Heart left ventricle (tissue), 16 donors: ENCODE measurements at regions of chr10 and their contacts with region 1.

Region 1: DNA sequence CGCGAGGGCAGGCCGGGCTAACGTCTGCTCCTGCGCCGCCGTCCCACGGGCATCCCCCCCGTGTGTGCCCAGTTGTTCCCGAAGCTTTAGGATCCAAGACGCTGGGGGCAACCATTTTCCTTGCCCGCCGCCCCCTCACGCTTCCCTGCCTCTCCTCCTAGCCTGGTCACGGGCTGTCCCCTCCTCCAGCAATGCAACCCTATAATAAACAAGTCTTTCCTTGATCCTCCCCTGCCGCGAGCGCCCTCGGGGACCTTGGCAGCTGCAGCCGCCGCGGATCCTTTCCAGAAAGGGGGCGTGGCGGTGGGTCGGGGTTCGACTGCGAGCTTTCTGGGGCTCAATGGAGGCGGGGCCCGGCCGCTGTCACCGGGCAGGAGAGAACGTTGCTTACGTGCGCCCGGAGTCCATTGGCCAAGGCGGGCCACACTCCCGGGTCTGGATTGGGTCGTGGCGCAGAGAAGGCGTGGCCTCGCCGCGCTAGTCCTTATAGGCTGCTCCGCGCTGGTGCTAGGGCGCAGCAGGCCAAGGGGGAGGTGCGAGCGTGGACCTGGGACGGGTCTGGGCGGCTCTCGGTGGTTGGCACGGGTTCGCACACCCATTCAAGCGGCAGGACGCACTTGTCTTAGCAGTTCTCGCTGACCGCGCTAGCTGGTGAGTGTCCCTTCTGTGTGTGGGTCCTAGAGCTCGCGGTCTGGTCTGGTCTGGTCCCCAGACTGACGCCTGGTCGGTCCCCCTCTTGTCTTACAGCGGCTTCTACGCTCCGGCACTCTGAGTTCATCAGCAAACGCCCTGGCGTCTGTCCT is at the start of gene DDIT4:
- DNase-seq: peak; percentile 99 to 100 (median 100)
- ATAC-seq: peak; percentile 91 to 94 (median 92)
- H3K4me3 ChIP-seq: peak within 1 kb of the TSS; percentile 66 to 98 (median 76)
- H3K27ac ChIP-seq: peak within 1 kb of the TSS; percentile 95 to 100 (median 99)
- H3K4me1 ChIP-seq: peaks cover 6 to 54% (median 34%) of the 10 kb centered on the region in 12 donors
- H3K27me3 ChIP-seq: no peaks in the 10 kb centered on the region
- CTCF ChIP-seq: no peak
- POLR2A ChIP-seq: peak; percentile 99 to 100
- total RNA-seq, gene DDIT4: 14.6 to 68.2 (median 40.4) TPM

Region 2: DNA sequence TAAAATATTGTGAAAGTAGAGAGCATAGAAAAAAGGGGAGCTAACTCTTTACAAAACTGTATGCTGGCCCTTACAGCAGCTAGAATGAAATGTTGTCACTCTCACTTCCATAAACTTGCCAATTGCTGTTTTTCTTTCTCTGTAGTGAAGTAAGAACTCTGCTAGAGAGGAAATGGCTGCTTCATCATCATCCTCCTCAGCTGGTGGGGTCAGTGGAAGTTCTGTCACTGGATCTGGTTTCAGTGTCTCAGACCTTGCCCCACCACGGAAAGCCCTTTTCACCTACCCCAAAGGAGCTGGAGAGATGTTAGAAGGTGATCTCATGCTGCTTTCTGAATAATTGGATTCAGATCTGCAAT is 49.9 kb before region 1 on chr10:
- intact Hi-C with region 1: loop called in 1 of 10 experiments (anchors 2 kb)
- DNase-seq: no peak
- ATAC-seq: peak; percentile 13 to 61 (median 32)
- H3K4me3 ChIP-seq: no peak overlapping the region
- H3K27ac ChIP-seq: peak overlapping the region in 11 of 12 donors; percentile 14 to 78 (median 58)
- H3K4me1 ChIP-seq: peaks cover 0 to 57% (median 21%) of the 10 kb centered on the region in 12 donors
- H3K27me3 ChIP-seq: no peaks in the 10 kb centered on the region
- CTCF ChIP-seq: no peak
- POLR2A ChIP-seq: no peak

Region 3: DNA sequence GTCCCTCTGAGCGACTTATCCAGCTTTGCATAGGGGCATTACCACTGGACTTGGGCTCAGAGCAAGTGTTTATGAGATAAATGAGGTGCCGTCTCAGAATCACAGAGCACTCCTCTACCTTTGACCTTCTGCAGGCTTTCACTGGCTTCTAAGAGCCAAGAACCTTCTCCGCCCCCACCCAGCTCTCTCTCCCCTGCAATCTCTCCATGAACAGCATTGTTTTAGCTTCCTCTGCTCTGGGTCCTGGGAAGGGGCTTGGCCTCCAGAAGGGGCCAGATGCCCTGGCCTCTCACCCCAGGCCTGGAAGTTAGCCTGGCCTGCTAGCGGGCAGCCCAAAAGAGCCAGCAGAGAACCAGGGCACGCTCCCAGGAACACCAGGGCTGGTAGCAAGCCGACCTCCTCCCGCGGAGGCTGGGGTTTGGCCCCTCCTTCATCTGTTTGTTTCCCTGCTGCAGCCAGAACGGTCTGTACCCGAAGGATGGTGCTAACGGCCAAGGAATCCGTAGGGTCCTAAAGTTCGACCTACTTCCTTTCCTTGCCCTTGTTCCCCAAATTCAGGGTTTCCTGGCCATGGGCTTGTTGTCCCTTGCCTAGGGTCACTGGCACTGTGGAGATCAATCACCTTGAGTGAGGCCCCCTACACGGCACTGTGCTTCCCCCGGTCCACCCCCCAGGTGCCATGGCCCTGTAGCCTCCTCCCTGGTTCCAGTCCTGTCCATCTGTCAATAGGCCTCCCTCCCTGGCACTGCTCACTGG is 18.6 kb before region 1 on chr10:
- intact Hi-C with region 1: loop called in 4 of 10 experiments (anchors 1 to 2 kb)
- DNase-seq: peak; percentile 87 to 96 (median 93)
- ATAC-seq: peak; percentile 92 to 95 (median 92)
- H3K4me3 ChIP-seq: peak overlapping the region in 7 of 12 donors; percentile 4 to 31 (median 23)
- H3K27ac ChIP-seq: peak overlapping the region; percentile 74 to 97 (median 94)
- H3K4me1 ChIP-seq: peaks cover 34 to 96% (median 78%) of the 10 kb centered on the region in 12 donors
- H3K27me3 ChIP-seq: no peaks in the 10 kb centered on the region
- CTCF ChIP-seq: peak in 3 of 12 donors; percentile 8 to 23 (median 13)
- POLR2A ChIP-seq: peak in 1 of 2 donors; percentile 67

Region 4: GRCh38 chr10:72297968-72298773 is 24.6 kb after region 1 on chr10:
- intact Hi-C with region 1: loop called in 1 of 10 experiments (anchors 2 kb)
- DNase-seq: peak; percentile 98 to 100 (median 99)
- ATAC-seq: peak; percentile 94 to 98 (median 96)
- H3K4me3 ChIP-seq: peak overlapping the region; percentile 42 to 92 (median 70)
- H3K27ac ChIP-seq: peak overlapping the region; percentile 79 to 99 (median 93)
- H3K4me1 ChIP-seq: peaks cover 0 to 37% (median 11%) of the 10 kb centered on the region in 12 donors
- H3K27me3 ChIP-seq: no peaks in the 10 kb centered on the region
- CTCF ChIP-seq: no peak
- POLR2A ChIP-seq: peak in 1 of 2 donors; percentile 88

Region 5: DNA sequence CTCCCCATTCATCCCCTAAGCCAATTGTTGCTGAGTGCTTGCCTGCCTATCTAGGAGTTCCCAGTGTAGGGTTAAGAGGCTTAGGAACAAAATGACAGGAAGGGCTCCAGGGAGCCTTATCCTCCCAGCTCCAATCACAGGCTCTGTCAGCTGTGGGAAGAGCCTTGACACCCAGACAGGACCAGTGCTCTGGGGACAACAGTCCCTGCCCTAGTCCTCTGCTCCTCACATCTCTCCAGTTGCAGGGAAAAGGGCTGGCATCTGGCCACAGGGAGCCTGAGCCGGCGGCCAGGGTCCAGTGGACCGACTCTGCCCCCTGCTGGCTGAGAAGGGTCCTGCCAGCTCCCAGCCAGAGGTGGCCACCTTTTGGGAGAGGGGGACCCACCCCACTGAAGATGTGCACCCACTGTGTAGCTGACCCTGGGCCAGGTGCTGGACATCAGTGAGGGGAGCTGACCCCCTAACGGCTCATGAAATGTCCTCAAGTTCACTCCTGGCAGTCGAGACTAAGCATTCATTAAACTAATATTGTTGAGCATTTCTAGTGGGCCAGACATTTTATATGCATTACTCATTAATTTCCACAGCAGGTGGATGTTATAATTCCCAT is 63.5 kb after region 1 on chr10:
- intact Hi-C with region 1: loop called in 2 of 10 experiments (anchors 2 to 5 kb)
- DNase-seq: peak; percentile 87 to 94 (median 92)
- ATAC-seq: peak; percentile 16 to 44 (median 39)
- H3K4me3 ChIP-seq: no peak overlapping the region
- H3K27ac ChIP-seq: peak overlapping the region; percentile 82 to 98 (median 92)
- H3K4me1 ChIP-seq: peaks cover 8 to 63% (median 53%) of the 10 kb centered on the region in 12 donors
- H3K27me3 ChIP-seq: no peaks in the 10 kb centered on the region
- CTCF ChIP-seq: peak; percentile 93 to 99 (median 98)
- POLR2A ChIP-seq: no peak

Region 6: GRCh38 chr10:72490951-72491350 is 217.3 kb after region 1 on chr10:
- intact Hi-C with region 1: no loop called
- DNase-seq: no peak
- ATAC-seq: no peak
- H3K4me3 ChIP-seq: no peak overlapping the region
- H3K27ac ChIP-seq: no peak overlapping the region
- H3K4me1 ChIP-seq: no peaks in the 10 kb centered on the region
- H3K27me3 ChIP-seq: no peaks in the 10 kb centered on the region
- CTCF ChIP-seq: no peak
- POLR2A ChIP-seq: no peak